ENCODE measurements at regions of chr3 and their contacts with region 1.

Region 1: GRCh38 chr3:124142389-124142970 is 150.6 kb upstream of the ROPN1 start:
- DNase-seq: no peak
- ATAC-seq: no peak
- H3K4me3 ChIP-seq: no peak overlapping the region
- H3K27ac ChIP-seq: no peak overlapping the region
- H3K4me1 ChIP-seq: no peaks in the 10 kb centered on the region
- H3K27me3 ChIP-seq: peaks cover 29% of the 10 kb centered on the region
- CTCF ChIP-seq: no peak

Region 2: GRCh38 chr3:124032648-124033359 is 109.7 kb before region 1 on chr3:
- CTCF ChIA-PET with region 1: no interaction called
- POLR2A ChIA-PET with region 1: no interaction called
- in situ Hi-C with region 1: no loop called
- intact Hi-C with region 1: no loop called
- DNase-seq: no peak
- ATAC-seq: peak; percentile 98
- H3K4me3 ChIP-seq: peak overlapping the region; percentile 55 to 66
- H3K27ac ChIP-seq: no peak overlapping the region
- H3K4me1 ChIP-seq: no peaks in the 10 kb centered on the region
- H3K27me3 ChIP-seq: peaks cover 45% of the 10 kb centered on the region
- CTCF ChIP-seq: peak; percentile 97

Region 3: DNA sequence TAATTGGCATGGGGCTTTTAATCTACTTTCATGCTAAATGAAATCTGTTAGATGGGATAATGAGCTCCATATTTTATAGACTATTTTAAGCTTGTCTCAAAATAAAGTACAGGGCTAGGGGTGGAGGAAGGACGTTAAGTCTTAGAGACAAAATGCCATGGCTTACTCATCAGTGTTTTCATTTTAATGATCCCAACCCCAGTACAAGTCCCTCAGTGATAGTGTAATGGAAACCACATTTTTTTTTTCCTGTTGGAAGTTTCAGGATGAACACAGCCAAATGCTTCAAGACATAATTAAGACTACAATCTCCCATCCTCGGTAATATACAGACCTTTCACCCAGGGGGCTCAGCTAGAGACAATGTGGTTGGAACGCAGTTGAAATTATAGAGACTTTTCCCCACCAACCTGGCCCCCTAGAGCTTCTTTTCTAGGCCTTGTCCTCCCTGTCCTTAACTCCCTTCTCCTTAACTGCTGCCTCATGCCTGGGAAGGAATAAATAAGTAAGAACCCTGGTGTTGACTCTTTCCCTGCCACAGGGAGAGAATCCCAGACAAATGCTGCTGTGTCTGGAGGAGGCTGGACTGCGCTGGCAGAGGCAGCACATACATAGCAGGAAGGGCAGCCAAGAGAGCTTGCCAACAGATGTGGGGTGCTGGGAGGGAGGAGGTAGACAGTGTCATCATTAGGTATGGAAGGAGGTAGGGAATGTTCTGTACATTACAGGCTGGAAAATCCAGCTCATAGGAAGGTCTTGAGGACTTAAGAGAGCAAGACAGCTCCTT is 35.2 kb before region 1 on chr3:
- CTCF ChIA-PET with region 1: no interaction called
- POLR2A ChIA-PET with region 1: no interaction called
- in situ Hi-C with region 1: loop called (anchors 5 kb)
- intact Hi-C with region 1: no loop called
- DNase-seq: no peak
- ATAC-seq: no peak
- H3K4me3 ChIP-seq: no peak overlapping the region
- H3K27ac ChIP-seq: no peak overlapping the region
- H3K4me1 ChIP-seq: no peaks in the 10 kb centered on the region
- H3K27me3 ChIP-seq: peaks cover 2% of the 10 kb centered on the region; the same call in 1 of the 2 replicates
- CTCF ChIP-seq: no peak

Measured in Panc1 (cell line).